Activated T-helper 1 cell treated with anti-CD3 and anti-CD28 coated beads, Interleukin-12 subunit alpha, Interleukin-12 subunit beta, Interleukin-2, Interleukin-4 antibody, amounts not matched to agents 30 ng/mL and 10 ng/mL and 1 ng/mL, durations not matched to agents 14 hours and 24 hours and 36 hours (primary cell): ENCODE measurements at regions of chr7 and their contacts with region 1.

Region 1: GRCh38 chr7:155598810-155599210 is 45.7 kb upstream of the RBM33 start:
- DNase-seq: peak; percentile 69
- H3K4me3 Mint-ChIP-seq: no peak overlapping the region
- H3K27ac Mint-ChIP-seq: no peak overlapping the region
- H3K4me1 Mint-ChIP-seq: peaks cover 10% of the 10 kb centered on the region
- H3K27me3 Mint-ChIP-seq: peaks cover 29% of the 10 kb centered on the region

Region 2: GRCh38 chr7:155141562-155141961 is 457.2 kb before region 1 on chr7:
- intact Hi-C with region 1: no loop called
- DNase-seq: no peak
- H3K4me3 Mint-ChIP-seq: no peak overlapping the region
- H3K27ac Mint-ChIP-seq: no peak overlapping the region
- H3K4me1 Mint-ChIP-seq: no peaks in the 10 kb centered on the region
- H3K27me3 Mint-ChIP-seq: peaks cover 17% of the 10 kb centered on the region

Region 3: GRCh38 chr7:155763691-155764437 is 165.1 kb after region 1 on chr7:
- intact Hi-C with region 1: loop called (anchors 1 kb)
- DNase-seq: peak; percentile 65
- H3K4me3 Mint-ChIP-seq: peak overlapping the region; percentile 85
- H3K27ac Mint-ChIP-seq: peak overlapping the region; percentile 100
- H3K4me1 Mint-ChIP-seq: peaks cover 66% of the 10 kb centered on the region
- H3K27me3 Mint-ChIP-seq: no peaks in the 10 kb centered on the region